ENCODE measurements at regions of chr4 and their contacts with region 1.

Region 1: DNA sequence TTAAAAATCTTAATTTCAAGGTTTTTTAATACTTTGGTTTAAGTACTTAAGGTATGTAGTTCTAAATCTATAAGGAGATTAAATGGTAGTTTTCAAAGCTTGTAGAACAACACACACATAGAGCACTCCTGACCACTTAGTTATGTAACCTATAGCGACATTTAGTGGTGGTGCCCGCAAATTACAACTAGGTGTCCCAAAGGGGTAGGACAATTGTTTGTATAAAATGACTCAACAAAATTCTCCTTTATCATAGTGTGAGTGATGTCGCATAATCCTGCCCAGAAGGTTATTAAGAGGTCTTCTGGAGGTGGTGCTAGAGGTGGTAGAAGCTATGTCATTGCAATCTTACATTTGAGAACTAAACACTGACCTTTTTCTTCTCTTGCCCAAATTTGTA is 373.0 kb upstream of the RASGEF1B start:
- DNase-seq: peak; percentile 90
- H3K4me3 Mint-ChIP-seq: no peak overlapping the region
- H3K27ac Mint-ChIP-seq: no peak overlapping the region
- H3K4me1 Mint-ChIP-seq: peaks cover 4% of the 10 kb centered on the region
- H3K27me3 Mint-ChIP-seq: no peaks in the 10 kb centered on the region

Region 2: DNA sequence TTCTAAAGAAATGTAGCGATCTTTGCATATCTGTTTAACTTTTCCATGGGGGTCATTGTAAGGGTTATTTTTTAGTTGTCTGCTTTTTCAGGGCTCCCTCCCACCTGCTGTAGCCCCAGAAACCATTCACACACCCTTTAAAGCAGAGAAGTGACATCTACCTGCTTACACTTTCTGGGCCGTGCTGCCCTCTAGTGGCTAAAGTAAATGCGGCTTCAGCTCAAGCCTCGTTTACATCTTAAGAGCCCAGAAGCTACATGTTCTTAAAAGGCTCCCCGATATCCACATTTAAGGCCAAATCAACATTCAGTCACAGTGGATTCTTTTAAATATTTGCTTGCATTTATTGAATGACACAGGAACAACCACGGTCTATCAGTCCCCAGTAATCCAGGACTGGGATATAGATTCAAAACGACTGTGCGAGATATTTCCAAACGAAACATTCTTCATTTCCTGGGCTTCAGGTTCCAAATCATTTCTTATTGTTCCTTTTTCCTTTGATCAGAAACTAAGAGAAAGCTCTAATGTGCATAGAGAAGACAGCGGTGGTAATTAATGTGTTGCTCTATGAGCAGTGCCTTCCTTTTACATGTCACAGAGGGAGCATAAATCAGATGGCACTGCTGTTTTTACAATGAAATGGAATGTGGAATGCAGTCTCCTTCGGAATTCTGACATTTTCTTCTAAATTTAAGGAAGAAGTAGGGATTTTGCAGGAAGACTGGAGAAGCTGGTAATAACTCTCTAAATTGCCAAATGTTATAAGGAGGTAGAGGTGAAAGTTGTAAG is 492.9 kb before region 1 on chr4:
- intact Hi-C with region 1: no loop called
- DNase-seq: peak; percentile 86
- H3K4me3 Mint-ChIP-seq: no peak overlapping the region
- H3K27ac Mint-ChIP-seq: no peak overlapping the region
- H3K4me1 Mint-ChIP-seq: no peaks in the 10 kb centered on the region
- H3K27me3 Mint-ChIP-seq: peaks cover 5% of the 10 kb centered on the region

Region 3: GRCh38 chr4:81555489-81555888 is 289.2 kb before region 1 on chr4:
- intact Hi-C with region 1: loop called (anchors 5 kb)
- DNase-seq: no peak
- H3K4me3 Mint-ChIP-seq: no peak overlapping the region
- H3K27ac Mint-ChIP-seq: no peak overlapping the region
- H3K4me1 Mint-ChIP-seq: peaks cover 6% of the 10 kb centered on the region
- H3K27me3 Mint-ChIP-seq: no peaks in the 10 kb centered on the region

Region 4: DNA sequence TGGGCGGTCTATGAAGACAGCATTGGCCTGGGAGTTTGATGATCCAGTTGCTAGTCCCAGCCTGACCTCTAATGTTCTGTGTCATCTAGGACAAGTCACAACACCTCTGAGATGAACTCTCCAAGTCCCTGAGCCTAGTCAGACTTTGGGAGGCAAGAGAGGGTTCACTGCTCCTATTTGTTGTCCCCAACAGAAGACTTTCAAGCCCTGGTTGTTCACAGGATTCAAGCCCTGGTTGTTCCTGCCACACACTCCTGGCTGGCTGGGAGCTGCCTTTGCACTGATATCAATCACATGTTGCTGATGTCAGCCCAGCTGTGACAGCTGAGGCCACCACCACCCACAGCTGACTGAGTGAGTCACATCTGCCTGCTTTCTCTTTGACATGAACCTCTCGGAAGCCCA is 119.8 kb before region 1 on chr4:
- intact Hi-C with region 1: loop called (anchors 5 kb)
- DNase-seq: peak; percentile 81
- H3K4me3 Mint-ChIP-seq: no peak overlapping the region
- H3K27ac Mint-ChIP-seq: peak overlapping the region; percentile 72
- H3K4me1 Mint-ChIP-seq: peaks cover 9% of the 10 kb centered on the region
- H3K27me3 Mint-ChIP-seq: peaks cover 10% of the 10 kb centered on the region

Region 5: DNA sequence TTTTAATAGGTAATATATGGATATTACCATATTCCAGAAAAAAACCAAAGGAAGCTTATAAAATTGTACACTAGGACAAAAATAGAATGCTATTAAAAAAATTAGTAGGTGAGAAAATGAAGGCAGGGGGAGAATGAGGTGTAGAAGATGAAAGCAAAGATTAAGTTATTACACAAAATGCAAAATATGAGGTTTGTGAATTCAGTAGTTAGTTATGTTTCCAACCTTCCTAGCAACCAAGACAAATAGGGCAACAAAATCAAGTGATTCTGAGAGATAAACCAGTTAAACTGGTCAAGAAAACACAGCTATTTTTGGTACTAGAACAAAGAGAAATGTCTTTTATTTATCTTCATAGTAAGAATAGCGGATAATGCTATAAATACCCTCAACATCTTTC is 73.0 kb before region 1 on chr4:
- intact Hi-C with region 1: no loop called
- DNase-seq: no peak
- H3K4me3 Mint-ChIP-seq: no peak overlapping the region
- H3K27ac Mint-ChIP-seq: no peak overlapping the region
- H3K4me1 Mint-ChIP-seq: no peaks in the 10 kb centered on the region
- H3K27me3 Mint-ChIP-seq: no peaks in the 10 kb centered on the region

Region 6: GRCh38 chr4:81827577-81828202 is 17.0 kb before region 1 on chr4:
- intact Hi-C with region 1: loop called (anchors 2 kb)
- DNase-seq: no peak
- H3K4me3 Mint-ChIP-seq: no peak overlapping the region
- H3K27ac Mint-ChIP-seq: peak overlapping the region; percentile 71
- H3K4me1 Mint-ChIP-seq: peaks cover 9% of the 10 kb centered on the region
- H3K27me3 Mint-ChIP-seq: no peaks in the 10 kb centered on the region

Region 7: GRCh38 chr4:82201805-82202641 is 357.3 kb after region 1 on chr4:
- intact Hi-C with region 1: loop called (anchors 10 kb)
- DNase-seq: peak; percentile 80
- H3K4me3 Mint-ChIP-seq: no peak overlapping the region
- H3K27ac Mint-ChIP-seq: no peak overlapping the region
- H3K4me1 Mint-ChIP-seq: peaks cover 2% of the 10 kb centered on the region
- H3K27me3 Mint-ChIP-seq: peaks cover 24% of the 10 kb centered on the region

Region 8: GRCh38 chr4:82217986-82218715 is 373.4 kb after region 1 on chr4:
- intact Hi-C with region 1: no loop called
- DNase-seq: no peak
- H3K4me3 Mint-ChIP-seq: no peak overlapping the region
- H3K27ac Mint-ChIP-seq: no peak overlapping the region
- H3K4me1 Mint-ChIP-seq: peaks cover 7% of the 10 kb centered on the region
- H3K27me3 Mint-ChIP-seq: peaks cover 11% of the 10 kb centered on the region